ENCODE measurements at regions of chr17 and their contacts with region 1.

Region 1: DNA sequence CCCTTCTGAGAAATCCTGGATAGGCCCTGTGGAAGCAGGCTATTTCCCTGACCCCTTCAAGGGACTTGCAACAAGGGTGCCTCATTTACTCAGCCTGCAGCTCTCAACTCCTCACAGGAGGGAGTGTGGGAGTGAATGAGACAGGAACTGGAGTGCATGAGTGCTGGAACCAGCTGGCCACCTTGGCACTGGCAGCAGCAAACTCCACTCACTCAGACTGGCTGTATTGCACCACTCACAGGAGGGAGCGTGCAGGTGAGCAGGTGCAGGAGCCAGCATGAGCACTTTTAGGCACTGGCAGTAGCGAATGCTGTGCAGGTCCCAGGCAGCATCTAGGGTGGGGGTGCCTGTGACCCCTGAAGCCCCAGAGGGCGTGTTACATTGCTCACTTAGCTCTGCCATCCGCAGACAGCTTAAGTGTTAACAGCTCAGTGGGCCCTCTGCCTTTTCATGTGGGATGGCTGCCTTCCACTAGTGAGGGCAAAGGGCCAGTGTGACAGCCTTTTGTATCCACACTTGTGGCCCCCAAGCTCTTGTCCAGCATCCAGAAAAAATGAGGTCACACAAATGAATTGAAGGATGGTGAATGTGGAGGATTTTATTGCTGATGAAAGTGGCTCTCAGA is 11.0 kb upstream of the ZNHIT3 start:
- DNase-seq: no peak

Region 2: DNA sequence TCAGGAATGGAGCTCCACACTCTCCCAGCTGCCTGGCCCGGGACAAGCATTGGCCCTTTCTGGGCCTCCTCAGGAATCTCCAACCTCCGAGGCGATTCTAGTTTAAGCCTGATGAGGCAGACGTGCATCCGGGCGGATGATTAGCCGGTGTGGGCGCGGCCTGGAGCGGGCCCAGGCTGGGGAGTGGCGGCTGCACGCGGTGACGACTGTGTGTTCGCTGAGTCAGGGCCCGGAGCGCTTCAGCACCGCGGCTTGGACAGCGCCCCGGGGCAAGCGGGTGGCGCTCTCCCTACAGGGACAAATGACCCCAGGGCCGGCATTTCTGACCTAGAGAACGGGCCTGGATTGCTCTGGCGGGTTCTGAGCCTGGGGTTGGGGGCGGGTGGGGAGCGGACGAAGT is 11.5 kb before region 1 on chr17:
- CTCF ChIA-PET with region 1: no interaction called
- POLR2A ChIA-PET with region 1: no interaction called
- DNase-seq: peak; percentile 76

Region 3: GRCh38 chr17:36486204-36487194 is 11.0 kb after region 1 on chr17 and contains the start of gene ZNHIT3:
- CTCF ChIA-PET with region 1: no interaction called
- POLR2A ChIA-PET with region 1: interaction called, 16 read pairs
- DNase-seq: peak; percentile 82

Measured in HEK293T (cell line).